Heart right ventricle (tissue), 16 donors: ENCODE measurements at regions of chr6 and their contacts with region 1.

Region 1: DNA sequence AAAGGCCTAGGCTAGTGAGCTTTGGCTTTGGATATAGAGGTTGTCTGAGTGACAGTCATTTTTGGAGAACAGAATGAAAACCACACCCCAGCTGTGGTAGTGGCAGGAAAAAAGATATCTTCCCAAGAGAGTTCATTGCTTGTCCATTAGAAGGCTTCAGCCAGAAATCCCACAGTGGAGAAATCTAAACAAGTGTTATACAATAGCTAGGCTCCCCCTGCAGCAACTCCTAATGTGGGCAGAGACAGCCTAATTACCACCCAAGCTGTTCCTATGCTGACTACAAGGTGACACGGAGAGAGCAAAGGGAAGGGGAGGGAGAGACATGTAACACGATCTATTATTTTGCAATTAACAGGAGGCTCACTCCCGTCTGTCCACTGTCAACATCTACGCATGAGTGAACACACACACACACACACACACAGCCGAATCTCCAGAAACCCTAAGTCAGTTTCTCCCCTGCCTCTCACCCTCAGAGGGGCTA is 147.5 kb upstream of the TCF21 start:
- DNase-seq: no peak
- ATAC-seq: peak in 7 of 8 donors; percentile 39 to 79 (median 47)
- H3K4me3 ChIP-seq: no peak overlapping the region
- H3K27ac ChIP-seq: no peak overlapping the region
- H3K4me1 ChIP-seq: peaks cover 0 to 8% (median 0%) of the 10 kb centered on the region in 9 donors
- H3K27me3 ChIP-seq: no peaks in the 10 kb centered on the region
- CTCF ChIP-seq: no peak

Region 2: DNA sequence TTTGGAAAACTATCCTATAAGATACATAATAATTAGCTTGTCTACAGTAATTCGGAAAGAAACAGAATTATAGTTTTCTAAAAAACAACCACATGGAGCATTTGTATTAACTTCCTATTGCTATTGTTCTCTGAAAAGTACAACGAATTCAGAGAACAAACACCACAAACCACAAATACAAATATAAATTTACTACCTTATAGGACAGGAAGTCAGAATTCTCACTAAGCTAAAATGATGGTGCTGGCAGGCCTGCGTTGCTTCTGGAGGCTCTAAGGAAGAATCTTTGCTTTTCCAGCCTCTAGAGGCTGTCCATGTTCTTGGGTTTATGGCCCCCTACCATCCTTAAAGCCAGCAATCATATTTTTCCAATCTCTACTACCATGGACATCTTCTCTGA is 26.1 kb before region 1 on chr6:
- intact Hi-C with region 1: loop called in 1 of 10 experiments (anchors 1 kb)
- DNase-seq: no peak
- ATAC-seq: no peak
- H3K4me3 ChIP-seq: no peak overlapping the region
- H3K27ac ChIP-seq: no peak overlapping the region
- H3K4me1 ChIP-seq: no peaks in the 10 kb centered on the region
- H3K27me3 ChIP-seq: no peaks in the 10 kb centered on the region
- CTCF ChIP-seq: no peak

Region 3: GRCh38 chr6:134138226-134138975 is 397.0 kb after region 1 on chr6:
- intact Hi-C with region 1: no loop called
- DNase-seq: no peak
- ATAC-seq: no peak
- H3K4me3 ChIP-seq: no peak overlapping the region
- H3K27ac ChIP-seq: no peak overlapping the region
- H3K4me1 ChIP-seq: no peaks in the 10 kb centered on the region
- H3K27me3 ChIP-seq: no peaks in the 10 kb centered on the region
- CTCF ChIP-seq: no peak